ENCODE measurements at regions of chr5 and their contacts with region 1.

Region 1: GRCh38 chr5:43066799-43067741 is 27.0 kb upstream of the ANXA2R start:
- DNase-seq: peak; percentile 92
- H3K4me3 Mint-ChIP-seq: peak overlapping the region; percentile 96
- H3K27ac Mint-ChIP-seq: peak overlapping the region; percentile 99
- H3K4me1 Mint-ChIP-seq: peaks cover 37% of the 10 kb centered on the region
- H3K27me3 Mint-ChIP-seq: no peaks in the 10 kb centered on the region

Region 2: DNA sequence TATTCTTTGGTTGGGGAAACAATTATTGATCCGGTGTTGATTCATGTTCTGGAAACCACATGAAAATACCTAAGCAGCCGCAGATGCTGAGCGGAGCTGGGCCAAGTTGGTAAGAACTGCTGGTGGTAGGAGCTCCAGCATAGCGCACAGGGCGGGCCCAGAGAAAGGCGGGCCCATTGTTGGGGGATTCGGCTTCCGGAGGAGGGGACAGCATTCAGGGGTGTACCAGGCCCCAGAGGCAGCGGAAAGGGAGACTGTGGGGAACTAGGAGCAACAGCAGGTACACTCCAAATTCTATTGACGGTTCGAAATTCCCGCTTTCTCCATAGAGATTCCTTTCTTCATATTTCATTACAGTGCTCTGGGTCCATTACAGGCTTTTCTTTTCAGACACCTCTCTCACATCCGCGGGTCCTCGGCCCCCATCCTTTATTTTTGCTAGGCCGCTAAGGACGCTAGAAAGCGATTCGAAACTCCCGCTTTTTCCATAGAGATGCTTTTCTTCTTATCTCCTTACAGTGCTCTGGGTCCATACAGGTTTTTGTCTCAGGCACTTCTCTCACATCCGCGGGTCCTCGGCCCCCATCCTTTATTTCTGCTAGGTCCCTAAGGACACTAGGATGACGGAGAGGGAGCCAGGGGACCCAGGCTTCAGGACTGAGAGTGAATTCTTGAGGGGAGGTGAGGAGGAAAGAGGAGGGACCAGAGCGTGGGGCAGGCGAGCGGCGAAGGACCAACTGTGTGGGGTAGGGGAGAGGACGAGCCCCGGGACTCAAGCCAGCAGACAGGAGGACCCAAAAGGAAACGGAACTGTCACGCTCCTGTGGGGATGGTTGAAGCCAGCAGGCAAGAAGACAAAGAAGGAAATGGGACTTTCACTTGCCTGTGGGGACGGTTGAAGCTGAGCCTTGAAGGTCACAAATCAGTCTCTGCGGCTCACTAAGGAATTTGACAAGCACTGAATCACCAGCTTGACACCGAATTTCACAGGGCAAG is 310.2 kb before region 1 on chr5 and contains the start of gene CCDC152:
- CTCF ChIA-PET with region 1: no interaction called
- POLR2A ChIA-PET with region 1: no interaction called
- intact Hi-C with region 1: loop called (anchors 10 kb)
- DNase-seq: peak; percentile 72
- H3K4me3 Mint-ChIP-seq: peak within 1 kb of the TSS; percentile 73
- H3K27ac Mint-ChIP-seq: no peak within 1 kb of the TSS
- H3K4me1 Mint-ChIP-seq: peaks cover 8% of the 10 kb centered on the region
- H3K27me3 Mint-ChIP-seq: peaks cover 11% of the 10 kb centered on the region
- total RNA-seq, gene CCDC152: 6.2 to 6.7 TPM

Region 3: DNA sequence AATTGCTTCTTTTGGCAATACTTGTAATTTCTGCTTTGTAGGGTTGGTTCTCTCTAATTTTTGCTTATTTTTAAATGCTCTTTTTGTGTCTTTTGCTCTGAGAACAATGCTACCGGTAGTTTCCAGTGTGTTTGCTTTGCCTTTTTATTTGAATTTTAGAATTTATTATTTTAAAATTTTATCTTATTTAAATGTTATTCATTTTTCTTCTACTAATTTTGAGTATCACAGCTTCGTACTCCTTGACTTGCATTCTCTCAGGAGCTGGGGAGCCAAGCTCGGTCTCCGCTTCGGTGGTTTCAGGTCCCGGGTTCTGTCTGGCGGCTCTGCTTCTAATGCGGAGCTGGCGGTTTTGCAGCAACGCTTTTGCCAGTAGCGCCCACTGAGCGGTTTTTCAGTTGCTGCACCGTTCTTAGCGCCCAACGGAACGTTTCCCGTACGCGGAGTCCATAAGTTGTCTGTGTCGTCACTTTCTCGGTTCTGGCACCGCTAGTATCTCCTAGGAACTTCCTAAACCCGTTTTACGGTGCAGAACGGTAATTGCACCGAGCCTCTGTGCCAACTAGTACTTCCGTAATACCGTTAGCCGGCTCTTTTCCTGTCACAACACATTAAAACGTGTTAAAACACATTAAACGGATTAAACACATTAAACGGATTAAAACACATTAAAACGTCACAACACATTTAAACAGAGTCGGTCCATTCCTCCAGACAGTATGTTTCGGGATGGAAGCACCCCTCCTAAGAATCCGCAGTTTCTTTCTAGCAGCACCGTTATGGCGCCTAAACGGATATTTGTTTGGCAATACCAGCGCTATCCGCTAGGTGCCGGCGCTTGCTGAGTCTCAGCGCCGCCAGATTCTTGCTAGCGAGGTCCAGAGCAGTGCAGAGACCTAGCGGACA is 72.6 kb before region 1 on chr5:
- CTCF ChIA-PET with region 1: interaction called, 21 read pairs
- POLR2A ChIA-PET with region 1: interaction called, 18 read pairs
- intact Hi-C with region 1: loop called (anchors 1 kb)
- DNase-seq: peak; percentile 93
- H3K4me3 Mint-ChIP-seq: peak overlapping the region; percentile 87
- H3K27ac Mint-ChIP-seq: peak overlapping the region; percentile 94
- H3K4me1 Mint-ChIP-seq: peaks cover 25% of the 10 kb centered on the region
- H3K27me3 Mint-ChIP-seq: no peaks in the 10 kb centered on the region

Region 4: GRCh38 chr5:43040287-43041098 is 26.6 kb before region 1 on chr5 and contains the start of gene ANXA2R:
- CTCF ChIA-PET with region 1: interaction called, 45 read pairs
- POLR2A ChIA-PET with region 1: interaction called, 51 read pairs
- intact Hi-C with region 1: loop called (anchors 1 kb)
- DNase-seq: peak; percentile 97
- H3K4me3 Mint-ChIP-seq: peak within 1 kb of the TSS; percentile 94
- H3K27ac Mint-ChIP-seq: peak within 1 kb of the TSS; percentile 96
- H3K4me1 Mint-ChIP-seq: peaks cover 41% of the 10 kb centered on the region
- H3K27me3 Mint-ChIP-seq: no peaks in the 10 kb centered on the region
- total RNA-seq, gene ANXA2R: 2.8 to 3.8 TPM

Region 5: GRCh38 chr5:43305948-43306565 is 239.0 kb after region 1 on chr5:
- CTCF ChIA-PET with region 1: interaction called, 3 read pairs
- POLR2A ChIA-PET with region 1: interaction called, 12 read pairs
- intact Hi-C with region 1: loop called (anchors 2 kb)
- DNase-seq: no peak
- H3K4me3 Mint-ChIP-seq: peak overlapping the region; percentile 2
- H3K27ac Mint-ChIP-seq: peak overlapping the region; percentile 78
- H3K4me1 Mint-ChIP-seq: peaks cover 84% of the 10 kb centered on the region
- H3K27me3 Mint-ChIP-seq: no peaks in the 10 kb centered on the region

Region 6: DNA sequence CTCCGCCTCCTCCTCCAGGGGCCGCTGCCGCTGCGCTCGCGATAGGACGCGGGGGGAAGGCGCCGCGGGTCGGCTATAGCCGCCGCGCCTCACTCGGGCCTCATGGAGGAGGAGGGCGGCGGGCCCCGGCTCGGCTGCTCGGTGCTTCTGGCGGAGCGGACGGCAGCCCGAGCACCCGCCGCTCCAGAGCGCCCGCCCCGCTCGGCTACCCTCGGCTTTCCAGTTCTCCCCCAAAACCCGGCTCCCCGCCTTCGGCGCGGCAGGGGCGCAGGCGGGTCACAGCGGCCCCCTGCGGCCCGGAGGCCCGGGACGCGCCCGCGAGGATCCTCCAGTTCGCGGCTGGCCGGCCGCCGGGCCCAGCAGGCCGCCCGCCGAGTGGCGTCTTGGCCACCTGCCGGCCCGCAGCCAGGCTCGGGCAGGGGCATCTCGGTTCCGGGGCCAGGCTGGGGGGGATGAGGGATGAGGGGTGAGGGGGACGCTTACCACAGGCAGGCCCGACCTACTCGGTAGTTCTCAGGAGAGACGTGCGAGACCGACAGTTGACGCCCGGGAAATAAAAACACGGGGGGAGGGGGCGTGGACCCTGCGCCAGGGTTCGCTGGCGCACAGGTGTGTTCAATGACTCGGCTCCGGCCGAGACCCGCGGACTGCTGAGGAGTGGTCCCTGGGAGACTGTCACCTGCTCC is 489.9 kb after region 1 on chr5 and contains the start of gene PAIP1:
- CTCF ChIA-PET with region 1: no interaction called
- POLR2A ChIA-PET with region 1: no interaction called
- intact Hi-C with region 1: loop called (anchors 2 kb)
- DNase-seq: peak; percentile 89
- H3K4me3 Mint-ChIP-seq: peak within 1 kb of the TSS; percentile 90
- H3K27ac Mint-ChIP-seq: peak within 1 kb of the TSS; percentile 91
- H3K4me1 Mint-ChIP-seq: peaks cover 15% of the 10 kb centered on the region
- H3K27me3 Mint-ChIP-seq: no peaks in the 10 kb centered on the region
- total RNA-seq, gene PAIP1: 49.2 to 50.5 TPM